ENCODE measurements at regions of chr3 and their contacts with region 1.

Region 1: DNA sequence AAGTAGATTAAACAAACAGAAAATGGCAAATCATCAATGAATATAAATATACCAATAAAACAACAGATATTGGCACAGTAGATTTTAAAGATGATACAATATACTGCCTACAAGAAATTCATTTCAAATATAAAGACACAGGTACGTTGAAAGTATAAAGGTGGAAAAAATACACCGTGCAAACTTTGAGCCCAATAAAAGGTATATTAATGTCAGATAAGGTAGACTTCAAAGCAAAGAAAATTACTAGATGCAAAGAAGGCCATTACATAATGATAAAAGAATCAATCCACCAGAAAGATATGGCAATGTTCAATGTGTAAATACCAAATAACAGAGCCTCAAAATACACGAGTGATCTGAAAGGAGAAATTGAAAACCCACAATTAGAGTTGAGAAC is 34.3 kb upstream of the VIPR1 start:
- DNase-seq: no peak
- ATAC-seq: no peak
- H3K4me3 ChIP-seq: no peak overlapping the region
- H3K27ac ChIP-seq: no peak overlapping the region
- H3K4me1 ChIP-seq: peaks cover 0 to under 1% (median 0%) of the 10 kb centered on the region in 9 donors
- H3K27me3 ChIP-seq: peaks cover 0 to 6% (median 0%) of the 10 kb centered on the region in 7 donors
- CTCF ChIP-seq: no peak

Region 2: DNA sequence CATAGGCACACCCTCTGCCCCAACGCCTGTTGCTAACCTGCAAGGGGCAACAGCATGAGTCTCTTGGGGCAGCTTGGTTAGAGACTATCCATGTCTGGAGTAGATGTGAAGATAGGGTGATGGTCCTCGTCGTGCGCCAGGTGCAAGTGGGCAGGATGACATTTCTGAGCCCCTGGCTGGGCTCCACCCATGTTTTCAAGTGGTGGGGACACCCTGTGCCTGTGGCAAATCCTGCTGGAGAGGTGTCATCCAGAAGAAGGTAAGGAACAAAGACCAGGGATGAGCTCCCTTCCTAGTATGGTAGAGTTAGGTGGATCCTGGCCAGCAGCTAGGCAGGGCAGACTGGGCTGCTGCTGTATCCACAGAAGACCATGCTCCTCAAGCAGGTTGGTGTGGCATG is 1375.3 kb after region 1 on chr3:
- intact Hi-C with region 1: loop called in 1 of 10 experiments (anchors 5 kb)
- DNase-seq: no peak
- ATAC-seq: no peak
- H3K4me3 ChIP-seq: no peak overlapping the region
- H3K27ac ChIP-seq: no peak overlapping the region
- H3K4me1 ChIP-seq: no peaks in the 10 kb centered on the region
- H3K27me3 ChIP-seq: no peaks in the 10 kb centered on the region
- CTCF ChIP-seq: no peak